B cell (primary cell): ENCODE measurements at regions of chr9 and their contacts with region 1.

Region 1: DNA sequence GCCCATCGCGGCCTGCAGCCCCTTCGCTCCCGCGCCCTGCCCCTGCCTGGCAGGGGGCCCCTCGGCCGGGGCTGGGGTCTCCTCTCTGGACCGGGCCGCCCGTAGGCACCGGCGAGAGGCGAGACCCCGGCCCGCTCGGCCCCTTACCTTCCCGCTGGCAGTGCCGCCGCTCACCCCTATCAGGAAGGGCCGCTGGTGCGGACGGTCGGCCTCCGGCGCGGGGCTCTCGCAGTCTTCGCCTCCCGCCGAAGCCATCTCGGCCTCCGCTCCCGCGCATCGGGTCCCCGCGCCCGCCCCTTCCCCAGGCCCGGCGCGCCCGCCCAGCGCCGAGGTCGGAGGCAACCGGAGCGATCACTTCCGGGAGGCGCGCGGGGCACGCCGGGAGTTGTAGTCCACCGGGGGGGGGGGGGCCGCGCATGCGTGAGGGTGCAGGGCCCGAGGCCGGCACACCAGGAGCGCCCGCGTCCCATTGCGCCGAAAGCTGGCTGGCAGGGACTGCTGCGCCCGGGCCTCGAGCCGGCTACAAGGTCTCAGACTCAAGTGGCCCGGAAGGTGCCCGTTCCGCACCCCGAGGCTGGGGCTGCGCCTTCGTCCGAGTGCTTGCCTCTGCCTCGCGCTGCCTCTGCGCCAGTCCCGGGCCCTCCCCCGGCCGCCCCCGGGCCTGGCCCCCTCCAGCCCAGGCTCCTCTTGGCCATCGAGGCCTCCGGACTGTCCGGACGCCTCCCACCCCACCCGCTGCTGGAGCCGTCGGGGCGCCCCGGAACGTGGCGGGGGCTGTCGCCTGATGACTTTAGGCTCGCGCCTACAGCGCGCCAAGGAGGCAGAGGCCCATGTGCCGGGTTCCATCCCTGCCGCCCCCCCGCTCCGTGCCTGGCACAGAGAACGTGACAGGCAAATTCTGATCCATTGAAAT is at the start of gene UCK1:
- DNase-seq: peak; percentile 89
- ATAC-seq: peak; percentile 92
- H3K4me3 ChIP-seq: peak within 1 kb of the TSS; percentile 21 to 88 (median 70)
- H3K4me3 Mint-ChIP-seq: peak within 1 kb of the TSS; percentile 79
- H3K27ac ChIP-seq: peak within 1 kb of the TSS; percentile 18 to 64
- H3K27ac Mint-ChIP-seq: peak within 1 kb of the TSS; percentile 67
- H3K4me1 ChIP-seq: peaks cover 23 to 31% of the 10 kb centered on the region in 2 donors
- H3K4me1 Mint-ChIP-seq: peaks cover 21% of the 10 kb centered on the region
- H3K27me3 ChIP-seq: no peaks in the 10 kb centered on the region
- H3K27me3 Mint-ChIP-seq: no peaks in the 10 kb centered on the region
- CTCF ChIP-seq: no peak
- total RNA-seq, gene UCK1: 31.8 and 39.3 TPM in 2 replicates

Region 2: GRCh38 chr9:131393622-131394463 is 137.3 kb before region 1 on chr9 and contains the start of gene PRRC2B:
- CTCF ChIA-PET with region 1: no interaction called
- POLR2A ChIA-PET with region 1: no interaction called
- intact Hi-C with region 1: loop called (anchors 1 kb)
- DNase-seq: peak; percentile 91
- ATAC-seq: peak; percentile 64
- H3K4me3 ChIP-seq: peak within 1 kb of the TSS; percentile 53 to 80 (median 72)
- H3K4me3 Mint-ChIP-seq: peak within 1 kb of the TSS; percentile 88
- H3K27ac ChIP-seq: peak within 1 kb of the TSS; percentile 74 to 82
- H3K27ac Mint-ChIP-seq: peak within 1 kb of the TSS; percentile 90
- H3K4me1 ChIP-seq: peaks cover 42 to 47% of the 10 kb centered on the region in 2 donors
- H3K4me1 Mint-ChIP-seq: peaks cover 46% of the 10 kb centered on the region
- H3K27me3 ChIP-seq: no peaks in the 10 kb centered on the region
- H3K27me3 Mint-ChIP-seq: no peaks in the 10 kb centered on the region
- CTCF ChIP-seq: peak; percentile 48
- total RNA-seq, gene PRRC2B: 256 and 268 TPM in 2 replicates

Region 3: GRCh38 chr9:131502781-131503625 is 28.2 kb before region 1 on chr9 and contains the start of gene POMT1:
- CTCF ChIA-PET with region 1: no interaction called
- POLR2A ChIA-PET with region 1: no interaction called
- intact Hi-C with region 1: loop called (anchors 1 kb)
- DNase-seq: peak; percentile 93
- ATAC-seq: peak; percentile 86
- H3K4me3 ChIP-seq: peak within 1 kb of the TSS; percentile 63 to 92 (median 86)
- H3K4me3 Mint-ChIP-seq: peak within 1 kb of the TSS; percentile 94
- H3K27ac ChIP-seq: peak within 1 kb of the TSS; percentile 27 to 70
- H3K27ac Mint-ChIP-seq: peak within 1 kb of the TSS; percentile 88
- H3K4me1 ChIP-seq: peaks cover 11 to 22% of the 10 kb centered on the region in 2 donors
- H3K4me1 Mint-ChIP-seq: peaks cover 24% of the 10 kb centered on the region
- H3K27me3 ChIP-seq: no peaks in the 10 kb centered on the region
- H3K27me3 Mint-ChIP-seq: no peaks in the 10 kb centered on the region
- CTCF ChIP-seq: no peak
- total RNA-seq, gene POMT1: 41.9 and 46.7 TPM in 2 replicates

Region 4: DNA sequence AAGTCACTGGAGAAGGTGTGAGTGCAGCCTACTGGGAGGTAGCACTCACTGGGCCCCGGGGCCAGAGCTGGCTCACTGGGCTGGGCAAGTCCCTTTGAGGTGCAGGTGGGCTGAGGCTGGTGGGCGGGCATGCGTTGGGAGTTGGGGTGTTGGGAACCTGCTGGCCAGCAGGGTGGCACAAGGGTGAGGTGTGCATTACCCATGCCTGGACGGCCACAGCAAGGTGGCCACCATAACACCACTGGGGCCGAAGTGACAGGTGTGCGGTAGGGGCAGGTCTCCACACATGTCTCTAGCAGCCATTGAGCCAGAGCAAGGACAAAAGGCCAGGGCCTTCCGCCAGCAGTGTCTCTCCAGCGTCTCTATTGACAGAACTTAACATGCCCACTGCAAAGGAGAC is 36.7 kb after region 1 on chr9:
- CTCF ChIA-PET with region 1: no interaction called
- POLR2A ChIA-PET with region 1: no interaction called
- intact Hi-C with region 1: loop called (anchors 5 kb)
- DNase-seq: peak; percentile 22
- ATAC-seq: peak; percentile 33
- H3K4me3 ChIP-seq: no peak overlapping the region
- H3K4me3 Mint-ChIP-seq: no peak overlapping the region
- H3K27ac ChIP-seq: no peak overlapping the region
- H3K27ac Mint-ChIP-seq: peak overlapping the region; percentile 6
- H3K4me1 ChIP-seq: no peaks in the 10 kb centered on the region
- H3K4me1 Mint-ChIP-seq: no peaks in the 10 kb centered on the region
- H3K27me3 ChIP-seq: no peaks in the 10 kb centered on the region
- H3K27me3 Mint-ChIP-seq: no peaks in the 10 kb centered on the region
- CTCF ChIP-seq: no peak

Region 5: GRCh38 chr9:131781069-131781468 is 249.9 kb after region 1 on chr9:
- CTCF ChIA-PET with region 1: no interaction called
- POLR2A ChIA-PET with region 1: no interaction called
- intact Hi-C with region 1: no loop called
- DNase-seq: no peak
- ATAC-seq: no peak
- H3K4me3 ChIP-seq: no peak overlapping the region
- H3K4me3 Mint-ChIP-seq: no peak overlapping the region
- H3K27ac ChIP-seq: no peak overlapping the region
- H3K27ac Mint-ChIP-seq: no peak overlapping the region
- H3K4me1 ChIP-seq: no peaks in the 10 kb centered on the region
- H3K4me1 Mint-ChIP-seq: no peaks in the 10 kb centered on the region
- H3K27me3 ChIP-seq: peaks cover 0 to 15% (median 2%) of the 10 kb centered on the region in 4 experiments
- H3K27me3 Mint-ChIP-seq: peaks cover 46% of the 10 kb centered on the region
- CTCF ChIP-seq: no peak